ENCODE measurements at regions of chr5 and their contacts with region 1.

Region 1: DNA sequence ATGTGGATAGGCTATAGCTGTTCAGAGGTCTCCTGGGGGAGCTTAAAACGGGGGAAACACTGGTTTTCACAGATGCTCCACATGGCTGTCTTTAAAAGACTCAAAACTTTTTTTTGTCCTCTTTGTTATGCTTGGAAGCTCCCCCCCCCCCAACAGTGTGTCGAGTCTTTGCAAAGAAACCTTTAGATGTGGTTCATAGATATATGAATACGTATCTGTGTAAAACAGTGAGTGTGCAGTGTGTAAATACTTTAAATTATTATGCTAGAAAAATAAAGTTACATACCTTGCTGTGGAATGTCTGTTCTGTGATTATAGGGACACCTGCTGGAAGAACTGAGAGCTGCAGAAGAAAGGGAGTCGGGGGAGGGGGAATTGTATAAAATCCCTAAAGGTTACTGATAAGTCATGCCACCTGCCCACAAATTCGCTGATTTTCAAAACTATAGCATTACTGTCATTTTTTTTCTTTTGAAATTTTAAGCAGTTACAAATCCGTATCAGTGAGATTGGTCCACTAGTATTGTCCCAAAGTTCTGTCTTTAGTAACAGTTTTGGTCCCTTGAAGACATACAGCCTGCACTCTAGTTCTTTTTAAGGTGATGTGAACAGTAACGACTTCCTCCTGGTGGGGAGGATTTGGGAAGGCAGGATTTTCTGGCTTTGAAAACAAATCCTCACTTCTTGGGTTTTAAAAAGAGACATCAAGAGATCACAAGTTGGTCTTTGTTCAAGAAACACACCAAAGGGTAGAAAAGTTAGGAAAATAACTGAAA is 22.9 kb downstream of the RGMB start:
- DNase-seq: peak in 2 of 5 donors; percentile 25 to 54
- H3K4me3 ChIP-seq: no peak overlapping the region
- H3K4me3 Mint-ChIP-seq: no peak overlapping the region
- H3K27ac ChIP-seq: no peak overlapping the region
- H3K27ac Mint-ChIP-seq: peak overlapping the region in 1 of 8 donors; percentile 35
- H3K4me1 ChIP-seq: no peaks in the 10 kb centered on the region
- H3K4me1 Mint-ChIP-seq: peaks cover 0 to 5% (median 0%) of the 10 kb centered on the region in 3 donors
- H3K27me3 ChIP-seq: no peaks in the 10 kb centered on the region
- H3K27me3 Mint-ChIP-seq: no peaks in the 10 kb centered on the region

Region 2: GRCh38 chr5:98773464-98774191 is 22.8 kb before region 1 on chr5 and contains the start of gene RGMB:
- CTCF ChIA-PET with region 1: interaction called, 19 read pairs
- POLR2A ChIA-PET with region 1: no interaction called
- DNase-seq: peak; percentile 73 to 92 (median 85)
- H3K4me3 ChIP-seq: peak within 1 kb of the TSS; percentile 42
- H3K4me3 Mint-ChIP-seq: peak within 1 kb of the TSS; percentile 91 to 99 (median 96)
- H3K27ac ChIP-seq: peak within 1 kb of the TSS; percentile 5
- H3K27ac Mint-ChIP-seq: peak within 1 kb of the TSS; percentile 73 to 96 (median 88)
- H3K4me1 ChIP-seq: peaks cover 45% of the 10 kb centered on the region
- H3K4me1 Mint-ChIP-seq: peaks cover 42 to 72% (median 63%) of the 10 kb centered on the region in 3 donors
- H3K27me3 ChIP-seq: peaks cover 25% of the 10 kb centered on the region
- H3K27me3 Mint-ChIP-seq: peaks cover 23 to 28% of the 10 kb centered on the region in 2 donors
- total RNA-seq, gene RGMB: 5.1 to 5.2 TPM

Measured in CD8-positive, alpha-beta memory T cell (primary cell).